Dendritic cell treated with granulocyte-macrophage colony-stimulating factor and Interleukin-4, amounts not matched to agents 40 ng/mL and 50 ng/mL, for 4 days (primary cell): ENCODE measurements at regions of chr5 and their contacts with region 1.

Region 1: DNA sequence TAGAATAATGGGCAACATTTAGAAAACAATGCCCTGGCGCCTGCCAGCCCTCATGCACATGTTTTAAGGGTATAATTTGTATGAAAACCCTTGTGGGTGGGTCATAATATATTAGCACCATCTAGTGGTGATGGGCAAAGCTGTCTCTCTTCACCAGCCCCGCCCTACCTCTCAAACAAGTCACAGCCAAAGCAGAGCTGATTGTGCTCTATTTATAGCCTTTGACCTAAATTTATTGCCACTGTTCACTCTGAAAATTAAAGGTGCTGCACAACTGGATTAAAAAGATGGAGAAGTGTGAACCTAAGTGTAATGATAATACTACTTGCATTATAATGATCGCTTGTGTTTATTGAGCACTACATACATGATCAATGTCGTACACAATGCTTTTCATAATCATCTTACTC is 131.9 kb upstream of the ANKH start:
- H3K4me3 Mint-ChIP-seq: no peak overlapping the region
- H3K27ac Mint-ChIP-seq: no peak overlapping the region
- H3K4me1 Mint-ChIP-seq: peaks cover 49% of the 10 kb centered on the region
- H3K27me3 Mint-ChIP-seq: peaks cover 18% of the 10 kb centered on the region

Region 2: GRCh38 chr5:14956413-14957046 is 47.0 kb before region 1 on chr5:
- intact Hi-C with region 1: loop called (anchors 1 kb)
- H3K4me3 Mint-ChIP-seq: no peak overlapping the region
- H3K27ac Mint-ChIP-seq: no peak overlapping the region
- H3K4me1 Mint-ChIP-seq: peaks cover 18% of the 10 kb centered on the region
- H3K27me3 Mint-ChIP-seq: peaks cover 5% of the 10 kb centered on the region